Activated CD4-positive, alpha-beta T cell treated with anti-CD3 and anti-CD28 coated beads, Interleukin-2, amount 10 ng/mL, durations not matched to agents 24 days and 14 days (primary cell): ENCODE measurements at regions of chr1 and their contacts with region 1.

Region 1: DNA sequence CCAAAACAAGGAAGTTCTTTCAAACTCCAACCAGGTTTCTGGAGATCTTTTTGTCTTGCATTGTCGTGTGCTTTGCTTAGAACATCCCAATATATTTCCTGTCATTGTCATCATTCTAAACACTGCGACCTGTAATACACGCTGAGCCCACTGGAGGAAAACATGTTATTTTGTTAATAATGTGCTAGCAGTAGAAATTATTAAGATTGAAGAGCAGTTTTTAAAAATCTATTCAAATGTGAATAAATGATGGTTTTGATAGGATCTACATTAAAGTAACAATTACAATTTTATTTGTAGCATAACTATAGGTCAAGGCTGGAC is 268.5 kb downstream of the PTPRC start:
- DNase-seq: no peak
- H3K4me3 Mint-ChIP-seq: peak overlapping the region; percentile 72
- H3K27ac Mint-ChIP-seq: peak overlapping the region; percentile 80
- H3K4me1 Mint-ChIP-seq: peaks cover 56% of the 10 kb centered on the region
- H3K27me3 Mint-ChIP-seq: no peaks in the 10 kb centered on the region

Region 2: GRCh38 chr1:198711837-198712236 is 195.5 kb before region 1 on chr1:
- intact Hi-C with region 1: no loop called
- DNase-seq: no peak
- H3K4me3 Mint-ChIP-seq: no peak overlapping the region
- H3K27ac Mint-ChIP-seq: no peak overlapping the region
- H3K4me1 Mint-ChIP-seq: peaks cover 15% of the 10 kb centered on the region
- H3K27me3 Mint-ChIP-seq: no peaks in the 10 kb centered on the region

Region 3: GRCh38 chr1:198880818-198881597 is 26.4 kb before region 1 on chr1:
- intact Hi-C with region 1: loop called (anchors 1 kb)
- DNase-seq: no peak
- H3K4me3 Mint-ChIP-seq: peak overlapping the region; percentile 23
- H3K27ac Mint-ChIP-seq: peak overlapping the region; percentile 86
- H3K4me1 Mint-ChIP-seq: peaks cover 34% of the 10 kb centered on the region
- H3K27me3 Mint-ChIP-seq: no peaks in the 10 kb centered on the region